ENCODE measurements at regions of chr12 and their contacts with region 1.

Region 1: DNA sequence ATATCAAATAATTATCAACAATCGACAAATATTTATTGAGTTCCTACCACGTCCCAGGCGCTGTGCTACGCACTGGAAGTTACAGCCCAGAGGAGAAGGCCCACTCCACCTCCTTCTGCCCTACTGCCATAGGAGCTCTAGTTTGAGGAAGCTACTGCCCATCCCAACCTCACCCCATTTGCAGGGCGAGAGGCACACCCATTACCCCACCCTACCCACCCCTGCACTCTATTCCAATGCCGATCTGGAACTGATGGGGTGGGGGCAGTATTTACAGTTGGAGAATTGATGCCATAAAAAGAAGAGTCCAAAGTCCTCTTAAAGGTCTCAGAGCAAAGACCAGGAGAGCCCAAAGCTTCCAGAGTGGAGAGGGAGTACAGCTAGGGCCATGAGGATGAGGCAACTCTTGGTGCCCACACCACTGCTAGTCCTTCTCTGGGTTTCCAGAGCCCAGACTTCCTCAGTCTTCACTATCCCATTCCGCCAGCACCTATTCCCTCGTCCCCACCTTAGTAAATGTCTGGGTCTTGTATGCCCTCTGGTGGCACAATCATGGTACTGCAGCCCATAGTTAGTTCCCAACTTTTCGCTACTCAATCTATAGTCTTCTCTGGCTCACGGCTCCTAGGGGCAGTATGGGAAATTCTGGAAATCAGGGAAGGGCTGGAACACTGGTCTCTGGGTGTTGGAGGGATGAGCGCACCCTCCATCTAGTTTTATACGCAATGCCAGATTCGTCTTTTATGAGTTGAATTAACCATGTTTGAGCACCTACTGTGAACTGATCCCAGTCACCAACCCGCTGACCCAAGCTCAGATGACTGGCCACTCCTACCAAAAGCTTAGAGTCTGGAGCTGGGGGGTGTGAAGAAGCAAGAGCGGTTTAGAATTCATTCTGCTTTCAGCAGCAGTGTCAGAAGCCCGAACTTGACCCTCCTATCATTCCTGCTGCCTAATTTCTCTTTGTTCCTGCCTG is 6.9 kb upstream of the ADCY6 start:
- DNase-seq: peak; percentile 76
- ATAC-seq: peak; percentile 88
- H3K4me3 ChIP-seq: no peak overlapping the region
- H3K4me3 Mint-ChIP-seq: no peak overlapping the region
- H3K27ac ChIP-seq: no peak overlapping the region
- H3K27ac Mint-ChIP-seq: no peak overlapping the region
- H3K4me1 ChIP-seq: peaks cover 5% of the 10 kb centered on the region in 2 donors
- H3K4me1 Mint-ChIP-seq: peaks cover 9% of the 10 kb centered on the region
- H3K27me3 ChIP-seq: peaks cover 0 to 4% (median 0%) of the 10 kb centered on the region in 4 experiments
- H3K27me3 Mint-ChIP-seq: peaks cover 13% of the 10 kb centered on the region
- CTCF ChIP-seq: peak; percentile 98

Region 2: DNA sequence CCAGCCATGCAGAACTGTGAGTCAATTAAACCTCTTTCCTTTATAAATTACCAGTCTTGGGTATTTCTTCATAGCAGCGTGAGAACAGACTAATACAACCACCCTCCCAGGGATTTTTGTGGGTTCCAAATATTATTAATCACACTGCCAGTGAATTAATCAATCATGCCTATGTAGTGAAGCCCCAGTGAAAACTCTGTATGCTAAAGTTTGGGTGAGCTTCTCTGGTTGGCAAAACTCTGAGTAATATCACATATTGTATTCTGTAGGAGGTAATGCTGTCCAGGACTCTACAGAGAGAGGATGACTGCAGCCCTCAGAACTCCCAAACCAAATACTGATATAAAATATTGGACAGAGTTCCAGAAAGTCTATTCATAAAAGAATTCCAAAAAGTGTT is 1306.9 kb before region 1 on chr12:
- CTCF ChIA-PET with region 1: no interaction called
- POLR2A ChIA-PET with region 1: no interaction called
- intact Hi-C with region 1: no loop called
- DNase-seq: no peak
- ATAC-seq: no peak
- H3K4me3 ChIP-seq: no peak overlapping the region
- H3K4me3 Mint-ChIP-seq: no peak overlapping the region
- H3K27ac ChIP-seq: no peak overlapping the region
- H3K27ac Mint-ChIP-seq: no peak overlapping the region
- H3K4me1 ChIP-seq: no peaks in the 10 kb centered on the region
- H3K4me1 Mint-ChIP-seq: no peaks in the 10 kb centered on the region
- H3K27me3 ChIP-seq: peaks cover 0 to 10% (median 2%) of the 10 kb centered on the region in 4 experiments
- H3K27me3 Mint-ChIP-seq: peaks cover 34% of the 10 kb centered on the region
- CTCF ChIP-seq: no peak

Region 3: DNA sequence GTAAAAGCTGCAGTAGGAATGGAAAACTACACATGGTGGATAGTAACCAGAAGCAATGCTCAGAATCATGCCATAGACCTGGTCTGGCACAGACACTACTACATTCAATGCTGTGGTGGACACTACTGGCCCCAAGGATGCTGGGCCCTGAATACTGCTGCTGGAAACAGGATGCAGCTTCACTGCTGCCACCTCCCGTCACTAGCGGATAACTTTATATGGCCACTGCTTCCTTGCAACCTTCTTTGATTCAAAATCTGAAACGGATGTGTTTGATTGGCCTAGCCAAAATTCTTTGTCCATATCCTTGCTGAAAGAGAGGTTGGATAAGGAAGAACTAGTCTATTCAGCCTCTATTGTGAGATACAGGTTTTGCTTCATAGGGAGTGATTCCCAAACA is 37.5 kb before region 1 on chr12:
- CTCF ChIA-PET with region 1: interaction called, 177 read pairs
- POLR2A ChIA-PET with region 1: no interaction called
- intact Hi-C with region 1: loop called (anchors 1 kb)
- DNase-seq: no peak
- ATAC-seq: no peak
- H3K4me3 ChIP-seq: no peak overlapping the region
- H3K4me3 Mint-ChIP-seq: no peak overlapping the region
- H3K27ac ChIP-seq: no peak overlapping the region
- H3K27ac Mint-ChIP-seq: no peak overlapping the region
- H3K4me1 ChIP-seq: no peaks in the 10 kb centered on the region
- H3K4me1 Mint-ChIP-seq: no peaks in the 10 kb centered on the region
- H3K27me3 ChIP-seq: no peaks in the 10 kb centered on the region
- H3K27me3 Mint-ChIP-seq: no peaks in the 10 kb centered on the region
- CTCF ChIP-seq: no peak

Region 4: GRCh38 chr12:48777501-48778400 is 18.0 kb before region 1 on chr12:
- CTCF ChIA-PET with region 1: interaction called, 10 read pairs
- POLR2A ChIA-PET with region 1: no interaction called
- intact Hi-C with region 1: no loop called
- DNase-seq: no peak
- ATAC-seq: no peak
- H3K4me3 ChIP-seq: no peak overlapping the region
- H3K4me3 Mint-ChIP-seq: no peak overlapping the region
- H3K27ac ChIP-seq: no peak overlapping the region
- H3K27ac Mint-ChIP-seq: peak overlapping the region; percentile 39
- H3K4me1 ChIP-seq: no peaks in the 10 kb centered on the region
- H3K4me1 Mint-ChIP-seq: no peaks in the 10 kb centered on the region
- H3K27me3 ChIP-seq: peaks cover 0 to 3% (median 0%) of the 10 kb centered on the region in 4 experiments
- H3K27me3 Mint-ChIP-seq: peaks cover 7% of the 10 kb centered on the region
- CTCF ChIP-seq: no peak

Region 5: GRCh38 chr12:48814262-48815125 is 18.7 kb after region 1 on chr12:
- CTCF ChIA-PET with region 1: interaction called, 57 read pairs
- POLR2A ChIA-PET with region 1: no interaction called
- intact Hi-C with region 1: no loop called
- DNase-seq: peak; percentile 87
- ATAC-seq: peak; percentile 81
- H3K4me3 ChIP-seq: peak overlapping the region; percentile 38 to 84 (median 69)
- H3K4me3 Mint-ChIP-seq: peak overlapping the region; percentile 96
- H3K27ac ChIP-seq: peak overlapping the region in 1 of 2 donors; percentile 32
- H3K27ac Mint-ChIP-seq: peak overlapping the region; percentile 53
- H3K4me1 ChIP-seq: peaks cover 30 to 38% of the 10 kb centered on the region in 2 donors
- H3K4me1 Mint-ChIP-seq: peaks cover 29% of the 10 kb centered on the region
- H3K27me3 ChIP-seq: peaks cover 0 to 31% (median 16%) of the 10 kb centered on the region in 4 experiments
- H3K27me3 Mint-ChIP-seq: peaks cover 12% of the 10 kb centered on the region
- CTCF ChIP-seq: peak; percentile 99

Region 6: GRCh38 chr12:49060237-49061156 is 264.7 kb after region 1 on chr12 and contains the start of gene KMT2D:
- CTCF ChIA-PET with region 1: no interaction called
- POLR2A ChIA-PET with region 1: no interaction called
- intact Hi-C with region 1: no loop called
- DNase-seq: peak; percentile 97
- ATAC-seq: peak; percentile 72
- H3K4me3 ChIP-seq: peak within 1 kb of the TSS; percentile 81 to 97 (median 91)
- H3K4me3 Mint-ChIP-seq: peak within 1 kb of the TSS; percentile 97
- H3K27ac ChIP-seq: peak within 1 kb of the TSS; percentile 77 to 88
- H3K27ac Mint-ChIP-seq: peak within 1 kb of the TSS; percentile 99
- H3K4me1 ChIP-seq: peaks cover 46 to 50% of the 10 kb centered on the region in 2 donors
- H3K4me1 Mint-ChIP-seq: peaks cover 50% of the 10 kb centered on the region
- H3K27me3 ChIP-seq: no peaks in the 10 kb centered on the region
- H3K27me3 Mint-ChIP-seq: no peaks in the 10 kb centered on the region
- CTCF ChIP-seq: no peak
- total RNA-seq, gene KMT2D: 179 and 199 TPM in 2 replicates

Measured in B cell (primary cell).